GM12878 (cell line): ENCODE measurements at regions of chr13 and their contacts with region 1.

Region 1: DNA sequence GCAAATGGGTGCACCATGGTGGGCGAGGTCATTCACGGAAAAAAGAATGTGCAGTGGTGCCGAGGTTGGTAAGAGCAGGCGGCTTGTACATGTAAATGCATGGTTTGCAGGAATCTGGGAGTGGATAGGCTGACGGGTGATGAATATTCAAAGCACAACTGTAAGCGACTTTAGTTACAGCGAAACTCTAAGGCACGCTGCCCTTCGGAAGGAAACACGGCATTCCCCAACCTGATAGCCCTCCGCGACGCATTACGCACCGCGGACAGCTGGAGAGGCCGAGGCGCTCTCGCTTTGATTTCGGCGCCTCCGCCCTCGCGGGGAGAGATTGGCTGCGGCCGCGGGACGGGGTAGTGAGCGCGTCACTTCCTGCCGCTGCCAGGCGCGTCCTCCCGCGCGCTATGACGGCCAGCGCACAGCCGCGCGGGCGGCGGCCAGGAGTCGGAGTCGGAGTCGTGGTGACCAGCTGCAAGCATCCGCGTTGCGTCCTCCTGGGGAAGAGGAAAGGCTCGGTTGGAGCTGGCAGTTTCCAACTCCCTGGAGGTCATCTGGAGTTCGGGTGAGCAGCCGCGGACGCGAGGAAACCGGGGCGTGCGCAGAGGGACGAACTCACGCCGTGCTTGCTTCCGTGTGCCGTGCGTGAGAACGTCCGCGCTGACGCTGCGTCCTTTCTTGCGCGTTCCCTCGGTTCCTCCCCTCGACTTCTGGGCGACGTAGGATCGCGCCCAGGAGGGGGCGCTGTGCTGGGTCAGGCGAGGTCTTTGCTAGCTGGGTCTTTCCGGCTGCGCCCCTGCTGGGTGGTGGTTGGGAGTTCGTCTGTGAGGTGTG is at the start of gene NUDT15:
- DNase-seq: peak; percentile 96
- ATAC-seq: peak; percentile 94
- H3K4me3 ChIP-seq: peak within 1 kb of the TSS; percentile 85
- H3K27ac ChIP-seq: peak within 1 kb of the TSS; percentile 95
- H3K4me1 ChIP-seq: peaks cover 8% of the 10 kb centered on the region
- H3K27me3 ChIP-seq: no peaks in the 10 kb centered on the region
- CTCF ChIP-seq: peak; percentile 99 to 100 (median 99)
- EP300 ChIP-seq: peak in 1 of 2 experiments; percentile 16; a peak in 3 of 4 replicates
- POLR2A ChIP-seq: peak; percentile 100
- RAD21 ChIP-seq: peak; percentile 47; the same call in 1 of the 2 replicates
- polyA plus RNA-seq, gene NUDT15: 11.4 to 17.7 TPM

Region 2: GRCh38 chr13:48000778-48001628 is 36.6 kb before region 1 on chr13 and contains the start of gene SUCLA2:
- CTCF ChIA-PET with region 1: interaction called, 20 read pairs
- POLR2A ChIA-PET with region 1: interaction called, 3 read pairs
- RAD21 ChIA-PET with region 1: interaction called, 5 read pairs
- SMC1A ChIA-PET with region 1: interaction called, 7 read pairs
- in situ Hi-C with region 1: no loop called
- intact Hi-C with region 1: loop called (anchors 1 kb)
- DNase-seq: peak; percentile 52
- ATAC-seq: peak; percentile 100
- H3K4me3 ChIP-seq: peak within 1 kb of the TSS; percentile 82
- H3K27ac ChIP-seq: peak within 1 kb of the TSS; percentile 54; the same call in 1 of the 2 replicates
- H3K4me1 ChIP-seq: no peaks in the 10 kb centered on the region
- H3K27me3 ChIP-seq: no peaks in the 10 kb centered on the region
- CTCF ChIP-seq: no peak
- EP300 ChIP-seq: no peak
- POLR2A ChIP-seq: peak; percentile 89
- RAD21 ChIP-seq: no peak
- polyA plus RNA-seq, gene SUCLA2: 41.8 to 45.2 TPM

Region 3: DNA sequence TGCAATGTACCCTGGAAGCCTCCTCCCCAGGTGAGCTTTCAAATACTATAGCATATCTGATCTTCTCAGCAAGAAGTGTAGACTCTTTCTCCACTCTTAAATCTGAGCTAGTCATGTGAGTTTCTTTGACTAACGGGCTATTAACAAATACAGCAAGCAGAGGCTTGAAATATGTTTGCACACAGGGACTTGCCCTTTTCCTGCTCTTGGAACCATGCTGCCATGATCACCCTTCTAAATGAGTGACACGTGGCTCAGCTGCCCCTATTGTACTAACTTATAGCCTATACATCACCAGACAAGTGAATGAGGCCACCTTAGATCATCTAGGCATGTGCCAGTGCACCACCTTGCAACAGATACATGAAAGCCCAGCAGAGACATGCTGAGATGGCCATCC is 23.2 kb before region 1 on chr13:
- CTCF ChIA-PET with region 1: interaction called, 10 read pairs
- POLR2A ChIA-PET with region 1: no interaction called
- RAD21 ChIA-PET with region 1: no interaction called
- SMC1A ChIA-PET with region 1: no interaction called
- in situ Hi-C with region 1: no loop called
- intact Hi-C with region 1: no loop called
- DNase-seq: no peak
- ATAC-seq: no peak
- H3K4me3 ChIP-seq: no peak overlapping the region
- H3K27ac ChIP-seq: no peak overlapping the region
- H3K4me1 ChIP-seq: no peaks in the 10 kb centered on the region
- H3K27me3 ChIP-seq: no peaks in the 10 kb centered on the region
- CTCF ChIP-seq: no peak
- EP300 ChIP-seq: no peak
- POLR2A ChIP-seq: no peak
- RAD21 ChIP-seq: no peak

Region 4: GRCh38 chr13:48078251-48078656 is 40.7 kb after region 1 on chr13:
- CTCF ChIA-PET with region 1: interaction called, 16 read pairs
- POLR2A ChIA-PET with region 1: interaction called, 3 read pairs
- RAD21 ChIA-PET with region 1: no interaction called
- SMC1A ChIA-PET with region 1: interaction called, 3 read pairs
- in situ Hi-C with region 1: no loop called
- intact Hi-C with region 1: no loop called
- DNase-seq: peak; percentile 68
- ATAC-seq: peak; percentile 100
- H3K4me3 ChIP-seq: no peak overlapping the region
- H3K27ac ChIP-seq: peak overlapping the region; percentile 61
- H3K4me1 ChIP-seq: peaks cover 7% of the 10 kb centered on the region
- H3K27me3 ChIP-seq: no peaks in the 10 kb centered on the region
- CTCF ChIP-seq: peak; percentile 48 to 59 (median 57); a peak in 5 of 6 replicates
- EP300 ChIP-seq: peak in 1 of 2 experiments; percentile 22; a peak in 1 of 4 replicates
- POLR2A ChIP-seq: no peak
- RAD21 ChIP-seq: peak; percentile 40; the same call in 1 of the 2 replicates

Region 5: DNA sequence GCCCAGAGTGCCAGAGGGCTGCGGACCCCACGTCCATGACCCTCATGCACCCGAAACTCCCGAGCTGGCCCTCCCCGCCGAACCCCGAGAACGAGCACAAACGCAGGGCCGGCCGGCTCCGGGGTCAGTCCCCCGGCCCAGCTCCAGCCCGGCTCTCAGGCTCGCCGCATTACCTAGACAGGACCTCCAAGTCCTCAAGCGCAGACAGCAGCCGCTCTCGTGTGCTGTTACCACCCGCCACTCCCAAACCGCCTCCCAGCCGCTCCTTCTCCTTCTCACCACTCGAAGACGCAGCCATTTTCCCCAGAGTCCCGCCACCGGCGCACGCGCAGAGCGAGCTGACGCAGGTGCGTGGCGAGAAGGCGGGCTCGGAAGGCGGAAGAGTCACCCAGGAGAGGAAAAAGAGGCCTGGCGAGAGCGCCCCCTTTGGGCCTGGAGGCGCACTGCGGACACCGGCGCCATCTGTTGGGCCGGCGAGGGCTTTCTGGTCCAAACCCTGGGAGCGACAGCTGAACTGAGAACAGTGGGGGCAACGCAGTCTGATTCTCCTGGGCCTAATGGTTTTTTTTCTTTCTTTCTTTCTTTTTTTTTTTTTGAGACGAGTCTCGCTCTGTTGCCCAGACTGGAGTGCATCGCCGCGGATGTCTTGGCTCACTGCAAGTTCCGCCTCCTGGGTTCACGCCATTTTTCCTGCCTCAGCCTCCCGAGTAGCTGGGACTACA is 57.4 kb after region 1 on chr13 and contains the start of gene MED4:
- CTCF ChIA-PET with region 1: interaction called, 32 read pairs
- POLR2A ChIA-PET with region 1: interaction called, 8 read pairs
- RAD21 ChIA-PET with region 1: interaction called, 6 read pairs
- SMC1A ChIA-PET with region 1: interaction called, 4 read pairs
- in situ Hi-C with region 1: no loop called
- intact Hi-C with region 1: loop called (anchors 2 kb)
- DNase-seq: peak; percentile 79
- ATAC-seq: peak; percentile 95
- H3K4me3 ChIP-seq: peak within 1 kb of the TSS; percentile 80
- H3K27ac ChIP-seq: peak within 1 kb of the TSS; percentile 64
- H3K4me1 ChIP-seq: no peaks in the 10 kb centered on the region
- H3K27me3 ChIP-seq: no peaks in the 10 kb centered on the region
- CTCF ChIP-seq: peak; percentile 99 to 100 (median 99); a peak in 5 of 6 replicates
- EP300 ChIP-seq: no peak
- POLR2A ChIP-seq: peak; percentile 96
- RAD21 ChIP-seq: peak; percentile 51
- polyA plus RNA-seq, gene MED4: 103 to 117 TPM

Region 6: DNA sequence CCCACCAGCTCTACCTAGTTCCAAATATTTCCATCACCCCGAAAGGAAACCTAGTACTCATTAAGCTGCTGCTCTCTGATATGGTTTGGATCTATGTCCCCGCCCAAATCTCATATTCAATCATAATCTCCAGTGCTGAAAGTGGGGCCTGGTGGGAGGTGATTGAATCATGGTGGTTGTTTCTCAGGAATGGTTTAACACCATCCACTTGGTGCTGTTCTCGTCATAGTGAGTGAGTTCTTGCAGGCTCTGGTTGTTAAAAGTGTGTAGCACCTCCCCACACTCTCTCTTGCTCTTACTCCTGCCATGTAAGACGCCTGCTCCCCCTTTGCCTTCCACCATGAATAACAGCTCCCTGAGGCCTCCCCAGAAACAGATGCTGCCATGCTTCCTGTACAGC is 100.7 kb after region 1 on chr13:
- CTCF ChIA-PET with region 1: no interaction called
- POLR2A ChIA-PET with region 1: no interaction called
- RAD21 ChIA-PET with region 1: no interaction called
- SMC1A ChIA-PET with region 1: no interaction called
- in situ Hi-C with region 1: no loop called
- intact Hi-C with region 1: no loop called
- DNase-seq: no peak
- ATAC-seq: no peak
- H3K4me3 ChIP-seq: no peak overlapping the region
- H3K27ac ChIP-seq: no peak overlapping the region
- H3K4me1 ChIP-seq: no peaks in the 10 kb centered on the region
- H3K27me3 ChIP-seq: peaks cover 0 to 6% of the 10 kb centered on the region in 2 experiments; a peak in 1 of 4 replicates
- CTCF ChIP-seq: no peak
- EP300 ChIP-seq: no peak
- POLR2A ChIP-seq: no peak
- RAD21 ChIP-seq: no peak

Region 7: DNA sequence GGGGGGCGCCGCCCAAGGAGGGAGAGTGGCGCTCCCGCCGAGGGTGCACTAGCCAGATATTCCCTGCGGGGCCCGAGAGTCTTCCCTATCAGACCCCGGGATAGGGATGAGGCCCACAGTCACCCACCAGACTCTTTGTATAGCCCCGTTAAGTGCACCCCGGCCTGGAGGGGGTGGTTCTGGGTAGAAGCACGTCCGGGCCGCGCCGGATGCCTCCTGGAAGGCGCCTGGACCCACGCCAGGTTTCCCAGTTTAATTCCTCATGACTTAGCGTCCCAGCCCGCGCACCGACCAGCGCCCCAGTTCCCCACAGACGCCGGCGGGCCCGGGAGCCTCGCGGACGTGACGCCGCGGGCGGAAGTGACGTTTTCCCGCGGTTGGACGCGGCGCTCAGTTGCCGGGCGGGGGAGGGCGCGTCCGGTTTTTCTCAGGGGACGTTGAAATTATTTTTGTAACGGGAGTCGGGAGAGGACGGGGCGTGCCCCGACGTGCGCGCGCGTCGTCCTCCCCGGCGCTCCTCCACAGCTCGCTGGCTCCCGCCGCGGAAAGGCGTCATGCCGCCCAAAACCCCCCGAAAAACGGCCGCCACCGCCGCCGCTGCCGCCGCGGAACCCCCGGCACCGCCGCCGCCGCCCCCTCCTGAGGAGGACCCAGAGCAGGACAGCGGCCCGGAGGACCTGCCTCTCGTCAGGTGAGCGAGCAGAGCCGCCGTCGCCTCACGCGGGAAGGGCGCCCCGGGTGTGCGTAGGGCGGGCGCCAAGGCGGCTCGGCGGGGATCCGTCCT is 266.0 kb after region 1 on chr13 and contains the start of gene RB1:
- CTCF ChIA-PET with region 1: no interaction called
- POLR2A ChIA-PET with region 1: no interaction called
- RAD21 ChIA-PET with region 1: no interaction called
- SMC1A ChIA-PET with region 1: no interaction called
- in situ Hi-C with region 1: no loop called
- intact Hi-C with region 1: loop called (anchors 5 kb)
- DNase-seq: peak; percentile 51
- ATAC-seq: peak; percentile 73
- H3K4me3 ChIP-seq: peak within 1 kb of the TSS; percentile 87
- H3K27ac ChIP-seq: peak within 1 kb of the TSS; percentile 88
- H3K4me1 ChIP-seq: peaks cover 8% of the 10 kb centered on the region; the same call in 1 of the 2 replicates
- H3K27me3 ChIP-seq: no peaks in the 10 kb centered on the region
- CTCF ChIP-seq: 0 out of 6 replicates have a peak, but pooled peaks of 1 of the 3 experiments have one; percentile 5
- EP300 ChIP-seq: no peak
- POLR2A ChIP-seq: peak; percentile 91
- RAD21 ChIP-seq: no peak
- polyA plus RNA-seq, gene RB1: 2.8 to 3.6 TPM